Stomach (tissue), 19 donors: ENCODE measurements at regions of chr5 and their contacts with region 1.

Region 1: DNA sequence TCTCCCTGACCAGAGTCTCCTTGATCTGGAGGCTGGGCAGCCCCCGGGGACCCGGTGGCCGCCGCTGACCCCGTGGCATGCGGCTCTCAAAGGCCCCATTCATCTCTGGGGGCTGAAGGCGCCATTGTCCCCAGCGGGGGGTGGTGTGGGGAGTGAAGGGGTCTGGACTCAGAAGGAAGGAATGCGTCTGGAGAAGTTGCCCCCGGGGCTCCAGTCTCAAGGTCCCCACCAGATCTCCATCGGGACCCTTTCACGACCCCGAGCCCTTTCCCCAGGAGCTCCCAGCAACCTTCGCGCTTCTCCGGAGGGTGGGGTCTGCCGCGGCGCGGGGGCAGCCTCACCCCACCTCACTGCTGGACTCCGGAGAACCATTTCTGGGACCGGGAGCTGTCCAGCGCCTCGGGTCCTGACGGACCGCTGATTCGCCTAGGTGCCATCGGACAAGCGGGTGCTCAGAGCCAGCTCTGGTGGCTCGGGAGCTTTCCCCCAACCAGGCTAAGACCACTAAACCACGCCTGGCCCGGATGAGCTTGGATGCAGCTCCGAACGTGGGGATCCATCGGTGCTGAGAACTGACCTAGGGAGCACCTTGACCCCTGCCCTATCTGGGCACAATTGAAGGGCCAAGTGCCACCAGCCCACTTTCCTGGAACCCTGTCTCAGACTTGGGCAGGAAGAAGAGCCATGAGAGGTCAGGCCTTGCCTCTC is 5.1 kb upstream of the PCDH1 start:
- DNase-seq: peak in 1 of 2 donors; percentile 87
- H3K4me3 ChIP-seq: no peak overlapping the region
- H3K27ac ChIP-seq: no peak overlapping the region
- H3K4me1 ChIP-seq: peaks cover 7 to 48% (median 34%) of the 10 kb centered on the region in 4 donors
- H3K27me3 ChIP-seq: peaks cover 0 to 81% (median 29%) of the 10 kb centered on the region in 3 donors
- CTCF ChIP-seq: no peak
- EP300 ChIP-seq: no peak
- POLR2A ChIP-seq: no peak

Region 2: GRCh38 chr5:141816598-141817372 is 66.6 kb before region 1 on chr5:
- intact Hi-C with region 1: loop called (anchors 5 kb)
- DNase-seq: peak in 1 of 2 donors; percentile 55
- H3K4me3 ChIP-seq: no peak overlapping the region
- H3K27ac ChIP-seq: peak overlapping the region in 3 of 5 donors; percentile 34 to 58 (median 44)
- H3K4me1 ChIP-seq: peaks cover under 1 to 8% (median 4%) of the 10 kb centered on the region in 4 donors
- H3K27me3 ChIP-seq: peaks cover 0 to 34% (median 3%) of the 10 kb centered on the region in 3 donors
- CTCF ChIP-seq: no peak
- EP300 ChIP-seq: no peak
- POLR2A ChIP-seq: no peak